ENCODE measurements at regions of chr6 and their contacts with region 1.

Region 1: GRCh38 chr6:160137989-160138835 is 16.6 kb downstream of the SLC22A1 start:
- DNase-seq: peak; percentile 44 to 70 (median 65)
- H3K4me3 ChIP-seq: no peak overlapping the region
- H3K27ac ChIP-seq: no peak overlapping the region
- H3K4me1 ChIP-seq: peaks cover 0 to 2% (median 0%) of the 10 kb centered on the region in 4 experiments
- H3K27me3 ChIP-seq: peaks cover 0 to 49% (median 21%) of the 10 kb centered on the region in 5 experiments

Region 2: DNA sequence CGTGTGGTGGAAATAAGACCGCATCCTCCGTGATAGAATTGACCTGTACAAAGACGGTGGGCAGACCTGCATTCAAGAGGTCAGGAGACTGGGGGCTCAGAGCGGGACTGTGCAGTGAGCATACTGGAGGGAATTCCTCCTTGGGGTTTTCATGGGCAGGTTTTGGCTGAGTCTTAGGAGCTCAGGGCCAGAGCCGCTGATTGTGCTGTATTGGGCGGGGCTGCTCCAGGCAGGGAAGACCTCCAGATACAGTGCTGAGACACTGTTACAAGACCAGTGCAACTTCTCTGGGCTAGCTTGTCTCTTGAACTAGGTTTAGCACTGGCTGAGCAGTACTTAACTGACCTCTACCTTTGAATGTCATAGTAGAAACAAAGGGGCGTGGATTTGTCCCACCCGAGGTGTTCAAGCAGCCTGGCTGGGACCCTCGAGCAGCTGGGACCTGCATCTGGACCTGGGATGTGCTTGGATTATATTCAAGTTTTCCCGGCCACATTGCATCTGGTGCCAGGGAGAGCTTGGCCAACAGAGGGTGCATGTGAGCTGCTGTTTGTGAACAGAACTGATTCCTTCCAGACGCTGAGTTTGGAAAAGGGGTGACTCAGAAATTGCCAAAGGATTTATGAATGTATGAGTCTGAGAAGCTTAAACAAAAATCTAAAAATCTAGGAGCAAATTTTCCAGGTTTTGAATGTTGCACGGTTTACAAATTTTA is 50.0 kb before region 1 on chr6:
- CTCF ChIA-PET with region 1: no interaction called
- POLR2A ChIA-PET with region 1: no interaction called
- DNase-seq: peak in 2 of 3 donors; percentile 17 to 33
- H3K4me3 ChIP-seq: no peak overlapping the region
- H3K27ac ChIP-seq: no peak overlapping the region
- H3K4me1 ChIP-seq: no peaks in the 10 kb centered on the region
- H3K27me3 ChIP-seq: peaks cover 0 to 4% (median 0%) of the 10 kb centered on the region in 5 experiments

Region 3: GRCh38 chr6:160202411-160202810 is 64.2 kb after region 1 on chr6:
- CTCF ChIA-PET with region 1: no interaction called
- POLR2A ChIA-PET with region 1: no interaction called
- DNase-seq: no peak
- H3K4me3 ChIP-seq: no peak overlapping the region
- H3K27ac ChIP-seq: no peak overlapping the region
- H3K4me1 ChIP-seq: no peaks in the 10 kb centered on the region
- H3K27me3 ChIP-seq: no peaks in the 10 kb centered on the region

Region 4: DNA sequence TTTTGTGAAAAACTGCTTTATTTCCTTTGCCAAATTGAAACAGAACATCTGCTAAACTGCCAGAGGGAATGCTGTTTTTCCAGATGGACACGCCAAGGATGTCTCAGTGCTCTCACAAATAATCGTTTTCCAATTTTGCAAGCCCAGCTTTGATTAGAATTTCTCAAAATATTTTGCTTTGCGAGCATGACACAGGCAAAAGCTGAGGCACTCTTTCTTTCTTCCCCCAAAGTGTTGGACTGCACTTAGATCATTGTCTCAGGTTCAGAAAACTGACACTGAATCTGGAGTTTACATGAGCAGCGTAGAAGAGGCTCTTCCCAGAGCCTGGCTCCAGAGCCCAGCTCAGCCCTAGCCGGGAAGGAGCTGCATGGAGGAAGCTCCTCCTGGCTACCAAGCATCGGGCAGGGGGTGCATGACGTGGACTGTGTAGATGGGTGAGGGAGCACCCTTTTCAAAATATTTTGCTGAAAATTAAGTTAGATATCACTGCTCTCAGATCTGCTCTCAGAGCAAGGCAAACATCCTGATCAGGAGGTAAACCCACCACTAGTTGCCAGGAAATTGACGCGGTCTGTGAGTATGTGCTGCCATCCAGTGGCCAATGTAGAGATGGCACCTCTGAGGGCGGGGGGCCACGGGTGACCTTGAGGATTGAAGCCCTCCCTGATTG is 317.5 kb after region 1 on chr6:
- CTCF ChIA-PET with region 1: interaction called, 10 read pairs
- POLR2A ChIA-PET with region 1: no interaction called
- DNase-seq: peak; percentile 56 to 75 (median 73)
- H3K4me3 ChIP-seq: no peak overlapping the region
- H3K27ac ChIP-seq: no peak overlapping the region
- H3K4me1 ChIP-seq: peaks cover 7 to 42% (median 19%) of the 10 kb centered on the region in 4 experiments
- H3K27me3 ChIP-seq: peaks cover 0 to 73% (median 13%) of the 10 kb centered on the region in 5 experiments